Motor neuron (in vitro differentiated cells): ENCODE measurements at regions of chr6 and their contacts with region 1.

Region 1: GRCh38 chr6:30828027-30828960 is 56.0 kb upstream of the DDR1 start:
- ATAC-seq: peak; percentile 93 to 99 (median 98)
- H3K4me3 ChIP-seq: no peak overlapping the region
- H3K27ac ChIP-seq: peak overlapping the region in 1 of 2 donors; percentile 54
- H3K4me1 ChIP-seq: peaks cover 9% of the 10 kb centered on the region in 2 donors

Region 2: GRCh38 chr6:30877419-30878371 is 49.4 kb after region 1 on chr6:
- in situ Hi-C with region 1: loop called in 2 of 9 experiments (anchors 10 kb)
- ATAC-seq: peak; percentile 24 to 92 (median 38)
- H3K4me3 ChIP-seq: peak overlapping the region in 2 of 5 donors; percentile 6 to 26
- H3K27ac ChIP-seq: peak overlapping the region in 1 of 2 donors; percentile 47
- H3K4me1 ChIP-seq: peaks cover 22% of the 10 kb centered on the region in 2 donors

Region 3: DNA sequence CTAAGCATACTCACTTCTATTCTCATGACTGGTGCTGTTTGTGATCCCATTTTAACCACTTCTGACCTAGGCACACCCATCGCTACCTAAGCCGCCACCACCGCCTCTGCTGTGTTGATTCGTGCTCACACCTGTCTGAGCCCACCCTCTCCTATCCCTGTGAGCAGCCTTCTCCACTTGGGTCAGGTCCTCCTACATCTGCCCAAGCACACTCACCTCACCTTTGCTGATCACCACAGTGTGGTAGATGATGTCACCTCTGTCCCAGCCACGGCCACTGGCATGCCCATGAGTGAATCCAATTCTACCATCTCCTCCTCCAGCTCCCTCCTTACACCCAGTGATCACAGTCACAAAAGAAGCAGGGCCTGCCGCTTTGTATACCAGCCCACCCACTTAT is 202.8 kb after region 1 on chr6:
- in situ Hi-C with region 1: no loop called
- ATAC-seq: no peak
- H3K4me3 ChIP-seq: no peak overlapping the region
- H3K27ac ChIP-seq: no peak overlapping the region
- H3K4me1 ChIP-seq: no peaks in the 10 kb centered on the region

Region 4: GRCh38 chr6:31079656-31080261 is 251.5 kb after region 1 on chr6:
- in situ Hi-C with region 1: loop called in 4 of 9 experiments (anchors 10 to 25 kb)
- ATAC-seq: peak; percentile 70 to 87 (median 80)
- H3K4me3 ChIP-seq: no peak overlapping the region
- H3K27ac ChIP-seq: no peak overlapping the region
- H3K4me1 ChIP-seq: peaks cover 0 to 9% of the 10 kb centered on the region in 2 donors

Region 5: DNA sequence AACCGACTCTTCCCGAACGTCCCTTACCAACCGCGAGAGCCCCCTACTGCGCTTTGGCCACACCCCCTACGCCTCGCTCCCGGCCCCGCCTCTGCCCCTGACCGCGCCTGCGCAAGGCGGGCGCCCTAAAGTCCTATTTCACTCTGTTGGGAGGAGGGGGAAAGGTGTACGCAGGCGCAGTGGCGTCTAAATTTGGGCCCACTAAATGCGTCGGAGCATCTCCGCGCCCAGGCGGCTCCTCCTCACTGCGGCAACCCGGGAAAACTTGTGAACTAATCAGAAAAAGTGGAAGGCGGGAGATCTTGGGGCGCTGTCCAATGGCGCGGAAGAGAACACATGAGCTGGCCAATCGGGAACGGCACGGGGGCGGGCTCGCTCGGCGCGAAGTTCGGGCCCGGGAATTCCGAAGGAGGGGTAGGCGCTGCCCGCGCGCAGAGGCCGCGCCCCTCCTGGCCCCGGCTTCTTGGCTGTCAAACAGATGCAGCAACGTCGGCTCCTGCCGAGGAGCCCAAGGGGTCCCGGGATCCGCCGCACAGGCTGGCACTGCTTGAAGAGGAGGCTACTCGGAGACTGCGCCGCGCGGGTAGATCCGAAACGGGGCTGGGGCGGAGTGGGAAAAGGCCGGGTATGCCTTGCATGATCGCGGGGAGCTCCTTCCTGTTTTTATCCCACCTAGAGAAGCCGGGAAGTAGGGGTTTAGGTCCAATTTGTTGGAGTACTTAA is 330.0 kb after region 1 on chr6 and contains the start of gene TCF19:
- in situ Hi-C with region 1: no loop called
- ATAC-seq: peak; percentile 91 to 97 (median 96)
- H3K4me3 ChIP-seq: peak within 1 kb of the TSS; percentile 56 to 78 (median 65)
- H3K27ac ChIP-seq: no peak within 1 kb of the TSS
- H3K4me1 ChIP-seq: peaks cover 8% of the 10 kb centered on the region in 2 donors
- total RNA-seq, gene TCF19: 0.36 to 14.7 (median 2.6) TPM